ENCODE measurements at regions of chr15 and their contacts with region 1.

Region 1: DNA sequence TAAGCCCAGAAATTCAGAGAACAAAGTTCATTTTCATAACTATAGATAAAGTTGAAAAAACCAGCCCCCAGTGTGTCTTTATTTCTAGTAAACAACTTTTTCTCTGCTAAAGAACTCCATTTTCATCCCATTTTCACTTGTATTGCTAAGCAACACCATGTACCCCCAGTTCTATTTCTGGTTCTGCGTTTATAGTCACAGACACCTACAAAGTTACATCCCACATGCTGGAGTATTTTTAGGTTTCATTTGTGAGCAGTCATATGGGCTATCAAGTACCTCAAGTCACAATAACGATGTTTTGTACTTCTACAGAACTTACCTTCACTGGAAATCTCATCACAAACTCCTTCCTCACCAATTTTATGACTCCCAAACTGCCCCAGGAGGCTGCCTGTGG is 236.5 kb downstream of the RSL24D1 start:
- DNase-seq: no peak
- H3K4me3 ChIP-seq: no peak overlapping the region
- H3K27ac ChIP-seq: peak overlapping the region in 41 of 59 donors; percentile 16 to 85 (median 66)
- H3K27me3 ChIP-seq: no peaks in the 10 kb centered on the region
- CTCF ChIP-seq: no peak

Region 2: GRCh38 chr15:53976844-53977392 is 983.3 kb before region 1 on chr15:
- intact Hi-C with region 1: loop called in 1 of 2 experiments (anchors 10 kb)
- DNase-seq: peak in 7 of 10 donors; percentile 7 to 80 (median 42)
- H3K4me3 ChIP-seq: peak overlapping the region in 1 of 59 donors; percentile 64
- H3K27ac ChIP-seq: peak overlapping the region in 31 of 59 donors; percentile 12 to 83 (median 57)
- H3K27me3 ChIP-seq: peaks cover 0 to 36% (median 0%) of the 10 kb centered on the region in 45 donors
- CTCF ChIP-seq: peak in 31 of 56 donors; percentile 1 to 53 (median 26)

Measured in dorsolateral prefrontal cortex (tissue), 120 donors.